MCF 10A (cell line): ENCODE measurements at regions of chr1 and their contacts with region 1.

Region 1: GRCh38 chr1:153572569-153573015 is 6.9 kb upstream of the S100A2 start:
- DNase-seq: peak; percentile 94
- H3K4me3 Mint-ChIP-seq: no peak overlapping the region
- H3K27ac Mint-ChIP-seq: peak overlapping the region; percentile 67
- H3K4me1 Mint-ChIP-seq: peaks cover 33% of the 10 kb centered on the region
- H3K27me3 Mint-ChIP-seq: no peaks in the 10 kb centered on the region
- CTCF ChIP-seq: peak; percentile 98

Region 2: DNA sequence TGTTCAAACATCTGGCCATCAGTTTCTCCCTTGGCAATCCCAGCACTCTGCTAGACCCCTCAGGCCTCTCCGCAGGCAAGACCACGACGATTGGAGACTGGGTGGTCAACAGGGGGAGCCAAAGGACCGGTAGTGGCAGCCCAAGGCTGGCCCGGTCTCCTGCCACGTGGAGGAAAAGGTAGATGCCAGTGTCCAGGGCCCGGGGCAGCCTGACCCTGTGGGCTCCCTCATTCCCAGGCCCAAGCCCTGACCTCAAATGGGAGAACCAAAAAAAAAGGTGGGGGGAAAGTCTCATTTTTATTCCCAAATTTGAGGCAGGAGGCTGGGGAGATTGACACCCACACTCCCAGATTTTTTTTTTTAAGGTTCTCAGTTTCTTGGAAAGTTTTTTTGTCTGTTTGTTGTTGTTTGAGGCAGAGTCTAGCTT is 61.6 kb before region 1 on chr1:
- CTCF ChIA-PET with region 1: interaction called, 379 read pairs
- POLR2A ChIA-PET with region 1: interaction called, 110 read pairs
- intact Hi-C with region 1: loop called (anchors 1 kb)
- DNase-seq: peak; percentile 87
- H3K4me3 Mint-ChIP-seq: no peak overlapping the region
- H3K27ac Mint-ChIP-seq: peak overlapping the region; percentile 73
- H3K4me1 Mint-ChIP-seq: peaks cover 60% of the 10 kb centered on the region
- H3K27me3 Mint-ChIP-seq: no peaks in the 10 kb centered on the region
- CTCF ChIP-seq: peak; percentile 100

Region 3: DNA sequence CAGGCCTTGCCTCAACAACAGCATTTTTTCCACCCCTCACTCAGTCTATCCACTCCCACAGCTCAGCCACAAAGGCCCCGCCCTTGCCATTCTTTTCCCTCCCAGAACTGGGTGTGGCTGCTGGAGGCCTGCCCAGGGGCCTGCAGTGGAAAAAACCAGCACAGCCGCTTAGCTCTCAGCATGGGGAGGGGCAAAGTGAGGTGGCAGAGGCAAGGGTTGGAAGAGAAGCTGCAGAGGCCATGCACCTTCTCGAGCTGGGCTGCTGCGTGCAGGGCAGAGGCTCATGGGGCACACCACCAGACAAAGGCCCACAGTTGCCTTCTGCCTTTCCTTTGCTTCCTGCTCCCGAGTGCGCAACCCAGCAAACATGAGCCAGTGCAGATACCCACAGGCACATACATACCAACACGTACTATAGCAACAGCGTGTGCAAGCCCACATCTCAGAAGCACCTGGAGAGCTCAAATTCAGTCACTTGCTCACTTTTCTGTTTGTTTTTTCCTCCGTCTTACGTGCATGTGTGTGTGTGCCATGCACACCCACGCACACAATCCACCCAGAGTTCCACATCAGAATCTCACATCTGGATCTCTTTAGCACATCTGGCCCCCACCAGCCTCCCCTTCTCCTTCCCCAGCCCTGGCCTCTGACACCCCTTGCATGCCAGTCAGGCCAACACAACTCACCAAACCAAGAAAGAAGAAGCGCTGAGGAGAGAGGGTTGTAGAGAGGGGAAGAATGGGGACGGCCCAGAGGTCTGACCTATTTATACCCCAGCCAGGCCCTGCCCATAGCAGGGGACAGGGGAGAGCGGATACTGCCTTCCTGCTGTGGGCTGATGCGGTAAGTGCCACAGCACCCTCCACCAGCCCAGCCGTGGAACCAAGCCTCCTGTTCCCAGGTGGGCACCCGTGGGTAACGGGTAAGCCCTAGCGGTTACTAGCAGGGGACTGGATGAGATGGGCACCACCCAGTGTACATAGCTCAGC is 27.2 kb before region 1 on chr1 and contains the start of gene S100A4:
- CTCF ChIA-PET with region 1: interaction called, 224 read pairs
- POLR2A ChIA-PET with region 1: interaction called, 476 read pairs
- intact Hi-C with region 1: no loop called
- DNase-seq: peak; percentile 99
- H3K4me3 Mint-ChIP-seq: peak within 1 kb of the TSS; percentile 72
- H3K27ac Mint-ChIP-seq: peak within 1 kb of the TSS; percentile 92
- H3K4me1 Mint-ChIP-seq: peaks cover 89% of the 10 kb centered on the region
- H3K27me3 Mint-ChIP-seq: no peaks in the 10 kb centered on the region
- CTCF ChIP-seq: no peak
- total RNA-seq, gene S100A4: 27.2 and 60.7 TPM in 2 replicates

Region 4: DNA sequence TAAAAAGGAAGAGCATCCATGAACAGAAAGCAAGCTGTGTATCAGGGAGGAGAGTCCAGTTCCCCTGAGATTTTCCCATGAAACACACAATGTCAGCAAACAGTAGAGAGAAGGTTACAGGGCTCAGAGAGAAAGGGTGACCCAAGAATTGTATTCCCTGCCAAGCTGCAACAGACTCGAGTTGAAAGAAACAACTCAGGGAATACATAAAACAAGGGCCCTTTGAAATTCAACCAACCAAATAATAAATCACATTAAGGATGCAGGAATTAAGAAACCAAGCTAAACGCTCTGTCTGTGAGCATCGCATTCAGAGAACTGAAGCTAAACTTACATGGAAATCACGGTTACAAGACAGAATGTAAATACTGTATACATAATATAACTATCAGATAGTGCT is 20.2 kb after region 1 on chr1:
- CTCF ChIA-PET with region 1: interaction called, 19 read pairs
- POLR2A ChIA-PET with region 1: interaction called, 8 read pairs
- intact Hi-C with region 1: no loop called
- DNase-seq: no peak
- H3K4me3 Mint-ChIP-seq: no peak overlapping the region
- H3K27ac Mint-ChIP-seq: no peak overlapping the region
- H3K4me1 Mint-ChIP-seq: peaks cover 10% of the 10 kb centered on the region
- H3K27me3 Mint-ChIP-seq: no peaks in the 10 kb centered on the region
- CTCF ChIP-seq: no peak

Region 5: GRCh38 chr1:153626922-153627796 is 54.6 kb after region 1 on chr1 and contains the start of gene S100A13:
- CTCF ChIA-PET with region 1: interaction called, 66 read pairs
- POLR2A ChIA-PET with region 1: interaction called, 20 read pairs
- intact Hi-C with region 1: loop called (anchors 1 kb)
- DNase-seq: peak; percentile 98
- H3K4me3 Mint-ChIP-seq: peak within 1 kb of the TSS; percentile 84
- H3K27ac Mint-ChIP-seq: peak within 1 kb of the TSS; percentile 91
- H3K4me1 Mint-ChIP-seq: peaks cover 38% of the 10 kb centered on the region
- H3K27me3 Mint-ChIP-seq: no peaks in the 10 kb centered on the region
- CTCF ChIP-seq: peak; percentile 86
- total RNA-seq, gene S100A13: 210 and 236 TPM in 2 replicates

Region 6: GRCh38 chr1:153658400-153659174 is 86.0 kb after region 1 on chr1 and contains the start of gene SNAPIN:
- CTCF ChIA-PET with region 1: interaction called, 18 read pairs
- POLR2A ChIA-PET with region 1: interaction called, 9 read pairs
- intact Hi-C with region 1: loop called (anchors 1 kb)
- DNase-seq: peak; percentile 95
- H3K4me3 Mint-ChIP-seq: peak within 1 kb of the TSS; percentile 92
- H3K27ac Mint-ChIP-seq: peak within 1 kb of the TSS; percentile 91
- H3K4me1 Mint-ChIP-seq: peaks cover 5% of the 10 kb centered on the region
- H3K27me3 Mint-ChIP-seq: no peaks in the 10 kb centered on the region
- CTCF ChIP-seq: no peak
- total RNA-seq, gene SNAPIN: 55.9 and 63.7 TPM in 2 replicates